ENCODE measurements at regions of chr12 and their contacts with region 1.

Region 1: GRCh38 chr12:7060353-7060954 is at the start of gene C1S:
- DNase-seq: peak; percentile 89
- H3K4me3 ChIP-seq: no peak within 1 kb of the TSS
- H3K27ac ChIP-seq: no peak within 1 kb of the TSS
- H3K4me1 ChIP-seq: peaks cover 11% of the 10 kb centered on the region
- H3K27me3 ChIP-seq: no peaks in the 10 kb centered on the region
- CTCF ChIP-seq: peak; percentile 78 to 94
- total RNA-seq, gene C1S: 3.5 to 13.8 TPM

Region 2: GRCh38 chr12:6764011-6764828 is 296.2 kb before region 1 on chr12:
- CTCF ChIA-PET with region 1: no interaction called
- dilution Hi-C with region 1: no loop called
- in situ Hi-C with region 1: no loop called
- intact Hi-C with region 1: no loop called
- DNase-seq: peak; percentile 95
- H3K4me3 ChIP-seq: peak overlapping the region in 1 of 3 experiments; percentile 36
- H3K27ac ChIP-seq: peak overlapping the region; percentile 54
- H3K4me1 ChIP-seq: peaks cover 33% of the 10 kb centered on the region
- H3K27me3 ChIP-seq: no peaks in the 10 kb centered on the region
- CTCF ChIP-seq: no peak

Region 3: DNA sequence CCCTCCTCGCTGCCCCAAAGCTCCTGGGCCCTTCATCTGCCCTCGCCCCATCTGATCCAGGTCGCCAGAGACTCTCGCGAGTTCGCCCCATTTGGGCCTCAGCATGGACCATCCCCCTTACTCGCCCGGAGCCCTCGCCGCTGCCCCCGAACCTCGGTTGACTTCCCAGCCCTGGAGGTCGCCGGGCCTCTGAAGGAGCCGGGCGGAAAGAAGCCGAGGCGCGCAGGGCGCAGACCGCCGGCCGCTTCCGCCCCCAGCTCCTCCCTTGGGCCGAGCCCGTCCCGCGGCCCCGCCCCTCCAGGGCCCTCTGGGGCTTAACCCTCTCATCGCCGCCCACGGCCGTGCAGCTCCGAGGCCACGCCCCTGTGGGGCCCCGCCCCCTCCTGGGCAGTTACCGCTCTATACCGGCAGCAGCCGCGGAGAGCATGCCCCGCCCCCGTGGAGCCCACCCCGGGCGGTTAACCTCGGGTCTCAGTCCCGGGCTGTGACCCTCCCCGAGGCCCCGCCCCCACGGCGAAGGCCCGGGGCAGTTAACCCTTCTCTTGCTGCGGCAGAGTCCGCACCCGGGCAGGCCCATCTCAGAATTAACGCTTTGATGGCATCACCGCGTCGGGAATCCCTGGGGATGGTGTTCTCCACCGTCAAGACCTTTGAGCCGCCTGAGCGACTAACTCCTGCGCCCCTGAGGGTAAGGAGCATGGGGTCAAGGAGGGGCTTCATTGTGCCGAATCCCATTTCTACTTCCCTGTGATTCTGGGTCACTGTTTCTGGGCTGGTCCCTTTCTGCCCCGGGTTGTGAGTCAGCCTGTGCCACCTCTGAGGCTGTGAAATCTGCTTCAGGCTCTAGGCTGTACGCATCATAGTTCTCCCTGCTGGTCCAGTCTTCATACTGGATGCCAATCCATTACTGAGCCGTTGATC is 187.1 kb before region 1 on chr12 and contains the start of gene SPSB2:
- CTCF ChIA-PET with region 1: no interaction called
- dilution Hi-C with region 1: no loop called
- in situ Hi-C with region 1: no loop called
- intact Hi-C with region 1: no loop called
- DNase-seq: peak; percentile 89
- H3K4me3 ChIP-seq: peak within 1 kb of the TSS; percentile 68 to 88 (median 84)
- H3K27ac ChIP-seq: peak within 1 kb of the TSS; percentile 56
- H3K4me1 ChIP-seq: peaks cover 45% of the 10 kb centered on the region
- H3K27me3 ChIP-seq: no peaks in the 10 kb centered on the region
- CTCF ChIP-seq: no peak
- total RNA-seq, gene SPSB2: 7.8 to 9.8 TPM

Region 4: DNA sequence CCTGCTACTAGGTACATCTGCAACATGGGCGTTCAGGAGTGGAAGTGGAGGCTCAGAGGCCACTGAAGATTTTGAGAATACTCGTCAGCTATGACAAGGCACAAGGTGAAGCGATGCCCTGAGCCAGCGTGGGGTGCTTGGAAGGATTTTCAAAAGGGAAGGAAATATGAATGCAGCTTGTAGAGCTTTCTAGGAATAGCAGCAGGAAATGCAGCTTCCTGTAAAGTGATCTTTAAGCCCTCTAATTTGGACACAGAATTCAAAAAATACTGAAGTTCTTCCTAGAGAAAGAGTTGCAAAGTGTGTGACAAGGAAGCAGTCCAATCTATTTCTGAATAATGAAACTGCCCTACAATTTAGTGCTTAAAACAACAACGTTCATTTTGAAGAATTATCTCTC is 13.1 kb before region 1 on chr12:
- CTCF ChIA-PET with region 1: no interaction called
- dilution Hi-C with region 1: no loop called
- in situ Hi-C with region 1: no loop called
- intact Hi-C with region 1: no loop called
- DNase-seq: no peak
- H3K4me3 ChIP-seq: no peak overlapping the region
- H3K27ac ChIP-seq: no peak overlapping the region
- H3K4me1 ChIP-seq: no peaks in the 10 kb centered on the region
- H3K27me3 ChIP-seq: peaks cover 2% of the 10 kb centered on the region
- CTCF ChIP-seq: no peak

Region 5: DNA sequence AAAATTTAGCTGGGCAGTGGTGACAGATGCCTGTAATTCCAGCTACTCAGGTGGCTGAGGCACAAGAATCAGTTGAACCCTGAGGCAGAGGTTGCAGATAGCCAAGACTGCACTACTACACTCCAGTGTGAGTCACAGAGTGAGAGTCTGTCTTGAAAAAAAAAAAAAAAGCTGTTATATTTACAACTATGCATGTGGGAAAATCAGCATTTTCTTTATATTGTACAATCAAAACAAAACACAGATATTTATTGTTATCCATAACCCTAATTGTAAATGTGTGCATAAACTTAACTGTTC is 19.3 kb after region 1 on chr12:
- CTCF ChIA-PET with region 1: no interaction called
- dilution Hi-C with region 1: no loop called
- in situ Hi-C with region 1: no loop called
- intact Hi-C with region 1: loop called (anchors 1 kb)
- DNase-seq: peak; percentile 82
- H3K4me3 ChIP-seq: peak overlapping the region in 2 of 3 experiments; percentile 19
- H3K27ac ChIP-seq: peak overlapping the region; percentile 83
- H3K4me1 ChIP-seq: peaks cover 7% of the 10 kb centered on the region
- H3K27me3 ChIP-seq: no peaks in the 10 kb centered on the region
- CTCF ChIP-seq: no peak

Region 6: GRCh38 chr12:7101694-7102131 is 41.3 kb after region 1 on chr12:
- CTCF ChIA-PET with region 1: no interaction called
- dilution Hi-C with region 1: loop called (anchors 5 kb)
- in situ Hi-C with region 1: loop called in 1 of 2 experiments (anchors 5 kb)
- intact Hi-C with region 1: no loop called
- DNase-seq: no peak
- H3K4me3 ChIP-seq: no peak overlapping the region
- H3K27ac ChIP-seq: no peak overlapping the region
- H3K4me1 ChIP-seq: no peaks in the 10 kb centered on the region
- H3K27me3 ChIP-seq: no peaks in the 10 kb centered on the region
- CTCF ChIP-seq: no peak

Region 7: GRCh38 chr12:7142056-7142644 is 81.7 kb after region 1 on chr12:
- CTCF ChIA-PET with region 1: no interaction called
- dilution Hi-C with region 1: no loop called
- in situ Hi-C with region 1: no loop called
- intact Hi-C with region 1: loop called (anchors 1 kb)
- DNase-seq: peak; percentile 25
- H3K4me3 ChIP-seq: no peak overlapping the region
- H3K27ac ChIP-seq: no peak overlapping the region
- H3K4me1 ChIP-seq: no peaks in the 10 kb centered on the region
- H3K27me3 ChIP-seq: no peaks in the 10 kb centered on the region
- CTCF ChIP-seq: peak; percentile 75

Region 8: DNA sequence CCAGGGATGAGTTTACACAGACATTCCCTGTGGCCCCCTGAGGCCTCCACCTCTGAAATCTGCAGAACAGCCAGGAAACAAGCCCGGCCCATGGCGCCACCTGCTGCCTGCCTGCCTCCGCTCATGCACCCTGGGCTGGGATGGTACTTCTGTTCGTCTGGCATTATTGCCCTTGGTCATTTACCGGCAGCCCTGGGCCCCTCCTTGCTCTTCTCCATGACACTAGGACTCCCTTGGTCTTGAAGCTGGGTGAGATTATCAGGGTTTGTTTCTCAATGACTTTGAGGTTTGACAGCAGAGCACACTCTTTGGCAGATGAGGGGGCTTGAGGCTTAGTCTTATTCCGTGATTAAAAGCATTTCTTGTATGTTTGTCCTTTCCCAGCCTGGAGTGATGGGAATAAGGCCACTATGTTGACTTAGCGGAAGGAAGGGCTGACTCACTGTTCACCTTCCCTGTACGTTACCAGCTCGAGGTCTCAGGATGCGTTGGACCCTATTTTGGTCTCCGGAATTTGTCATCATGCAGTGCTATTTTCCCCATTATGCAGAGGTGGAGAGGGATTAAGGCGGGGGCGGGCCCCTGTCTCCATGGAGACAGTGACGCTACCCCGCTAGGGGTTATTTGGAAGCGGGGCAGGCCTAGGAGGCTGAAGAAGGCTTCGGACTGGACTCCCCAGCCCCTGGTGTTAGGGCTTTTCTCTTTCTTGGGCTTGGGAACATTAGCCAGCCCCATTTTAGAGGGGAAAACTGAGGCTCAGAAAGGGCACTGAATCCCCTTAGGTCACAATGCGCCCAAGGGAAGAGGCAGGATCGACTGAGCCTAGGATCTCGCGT is 128.3 kb after region 1 on chr12:
- CTCF ChIA-PET with region 1: no interaction called
- dilution Hi-C with region 1: no loop called
- in situ Hi-C with region 1: no loop called
- intact Hi-C with region 1: loop called (anchors 1 kb)
- DNase-seq: peak; percentile 61
- H3K4me3 ChIP-seq: peak overlapping the region; percentile 45 to 99 (median 92)
- H3K27ac ChIP-seq: peak overlapping the region; percentile 76
- H3K4me1 ChIP-seq: peaks cover 18% of the 10 kb centered on the region
- H3K27me3 ChIP-seq: no peaks in the 10 kb centered on the region
- CTCF ChIP-seq: peak; percentile 73 to 92

Region 9: DNA sequence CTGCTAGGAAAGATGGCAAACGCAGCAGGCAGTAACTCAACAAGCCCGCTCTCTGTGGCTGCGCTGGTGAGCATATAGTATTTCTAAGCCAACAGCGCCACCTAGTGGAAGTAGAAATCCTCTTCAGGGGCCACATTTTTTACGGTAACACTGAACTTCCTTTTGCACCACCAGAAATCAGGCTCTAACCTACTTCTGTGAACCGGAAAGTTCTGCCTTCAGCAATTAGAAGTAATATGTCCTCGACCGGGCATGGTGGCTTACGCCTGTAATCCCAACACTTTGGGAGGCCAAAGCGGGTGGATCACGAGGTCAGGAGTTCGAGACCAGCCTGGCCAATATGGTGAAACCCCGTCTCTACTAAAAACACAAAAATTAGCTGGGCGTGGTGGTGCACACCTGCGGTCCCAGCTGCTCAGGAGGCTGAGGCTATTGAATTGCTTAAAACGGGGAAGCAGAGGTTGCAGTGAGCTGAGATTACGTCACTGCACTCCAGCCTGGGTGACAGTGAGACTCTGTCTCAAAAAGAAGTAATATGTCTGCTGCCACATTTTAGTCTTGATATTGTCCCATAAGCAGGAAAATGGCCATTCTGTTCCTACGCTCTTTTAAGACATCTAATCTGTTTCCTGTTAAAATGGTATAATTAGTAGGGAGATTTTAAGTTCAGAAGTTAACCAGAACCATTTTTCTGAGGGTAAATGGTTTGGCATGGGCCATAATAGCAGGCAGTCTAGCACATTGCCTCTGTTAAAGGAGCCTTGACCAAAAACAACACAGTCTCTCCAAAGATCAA is 578.5 kb after region 1 on chr12:
- CTCF ChIA-PET with region 1: no interaction called
- dilution Hi-C with region 1: no loop called
- in situ Hi-C with region 1: no loop called
- intact Hi-C with region 1: loop called (anchors 10 kb)
- DNase-seq: peak; percentile 61
- H3K4me3 ChIP-seq: no peak overlapping the region
- H3K27ac ChIP-seq: no peak overlapping the region
- H3K4me1 ChIP-seq: peaks cover 7% of the 10 kb centered on the region
- H3K27me3 ChIP-seq: no peaks in the 10 kb centered on the region
- CTCF ChIP-seq: peak; percentile 66 to 75